ENCODE measurements at regions of chr1 and their contacts with region 1.

Region 1: GRCh38 chr1:205172729-205173366 is 38.7 kb downstream of the DSTYK start:
- DNase-seq: peak; percentile 91
- H3K4me3 ChIP-seq: no peak overlapping the region
- H3K27ac ChIP-seq: peak overlapping the region; percentile 53
- H3K4me1 ChIP-seq: peaks cover 27% of the 10 kb centered on the region
- H3K27me3 ChIP-seq: no peaks in the 10 kb centered on the region
- CTCF ChIP-seq: no peak

Region 2: GRCh38 chr1:203326830-203327683 is 1845.8 kb before region 1 on chr1:
- CTCF ChIA-PET with region 1: interaction called, 10 read pairs
- dilution Hi-C with region 1: no loop called
- in situ Hi-C with region 1: no loop called
- intact Hi-C with region 1: no loop called
- DNase-seq: peak; percentile 89
- H3K4me3 ChIP-seq: peak overlapping the region; percentile 47 to 59 (median 51)
- H3K27ac ChIP-seq: peak overlapping the region; percentile 37
- H3K4me1 ChIP-seq: peaks cover 14% of the 10 kb centered on the region
- H3K27me3 ChIP-seq: no peaks in the 10 kb centered on the region
- CTCF ChIP-seq: no peak

Region 3: DNA sequence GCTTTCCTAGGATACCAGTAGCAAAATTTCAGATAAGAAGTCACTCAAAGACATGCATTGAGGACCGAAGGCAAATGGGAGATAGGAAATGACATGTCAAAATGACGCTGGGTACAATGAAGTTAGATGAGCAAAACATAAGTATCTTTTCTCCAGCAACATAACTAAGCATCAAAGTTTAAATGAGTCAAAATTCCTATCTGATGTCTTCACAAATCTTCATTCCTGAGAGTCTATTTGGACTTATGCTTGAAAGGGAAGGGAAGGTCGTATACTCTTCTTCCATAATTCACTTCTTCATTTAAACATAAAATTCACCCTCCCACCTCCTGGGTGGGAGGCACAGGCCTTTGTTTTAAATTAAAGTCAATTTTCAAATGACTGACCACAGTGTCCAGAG is 84.5 kb before region 1 on chr1:
- CTCF ChIA-PET with region 1: no interaction called
- dilution Hi-C with region 1: no loop called
- in situ Hi-C with region 1: no loop called
- intact Hi-C with region 1: no loop called
- DNase-seq: no peak
- H3K4me3 ChIP-seq: no peak overlapping the region
- H3K27ac ChIP-seq: no peak overlapping the region
- H3K4me1 ChIP-seq: no peaks in the 10 kb centered on the region
- H3K27me3 ChIP-seq: no peaks in the 10 kb centered on the region
- CTCF ChIP-seq: no peak

Region 4: GRCh38 chr1:205121660-205122488 is 51.0 kb before region 1 on chr1 and contains the start of gene RBBP5:
- CTCF ChIA-PET with region 1: interaction called, 3 read pairs
- dilution Hi-C with region 1: no loop called
- in situ Hi-C with region 1: no loop called
- intact Hi-C with region 1: loop called (anchors 2 kb)
- DNase-seq: peak; percentile 93
- H3K4me3 ChIP-seq: peak within 1 kb of the TSS; percentile 68 to 96 (median 85)
- H3K27ac ChIP-seq: peak within 1 kb of the TSS; percentile 99
- H3K4me1 ChIP-seq: peaks cover 12% of the 10 kb centered on the region
- H3K27me3 ChIP-seq: no peaks in the 10 kb centered on the region
- CTCF ChIP-seq: peak; percentile 67 to 85
- total RNA-seq, gene RBBP5: 15.2 to 17.5 TPM

Region 5: GRCh38 chr1:205141236-205142101 is 31.4 kb before region 1 on chr1:
- CTCF ChIA-PET with region 1: interaction called, 12 read pairs
- dilution Hi-C with region 1: no loop called
- in situ Hi-C with region 1: no loop called
- intact Hi-C with region 1: loop called (anchors 1 kb)
- DNase-seq: peak; percentile 66
- H3K4me3 ChIP-seq: no peak overlapping the region
- H3K27ac ChIP-seq: no peak overlapping the region
- H3K4me1 ChIP-seq: peaks cover 8% of the 10 kb centered on the region
- H3K27me3 ChIP-seq: no peaks in the 10 kb centered on the region
- CTCF ChIP-seq: peak; percentile 69 to 74

Region 6: GRCh38 chr1:205199090-205199930 is 26.5 kb after region 1 on chr1:
- CTCF ChIA-PET with region 1: no interaction called
- dilution Hi-C with region 1: no loop called
- in situ Hi-C with region 1: no loop called
- intact Hi-C with region 1: loop called (anchors 2 kb)
- DNase-seq: peak; percentile 73
- H3K4me3 ChIP-seq: no peak overlapping the region
- H3K27ac ChIP-seq: no peak overlapping the region
- H3K4me1 ChIP-seq: peaks cover 11% of the 10 kb centered on the region
- H3K27me3 ChIP-seq: no peaks in the 10 kb centered on the region
- CTCF ChIP-seq: no peak

Region 7: GRCh38 chr1:205211169-205211838 is 38.5 kb after region 1 on chr1 and contains the start of gene DSTYK:
- CTCF ChIA-PET with region 1: no interaction called
- dilution Hi-C with region 1: no loop called
- in situ Hi-C with region 1: loop called in 1 of 2 experiments (anchors 5 kb)
- intact Hi-C with region 1: loop called (anchors 1 kb)
- DNase-seq: peak; percentile 93
- H3K4me3 ChIP-seq: peak within 1 kb of the TSS; percentile 71 to 97 (median 81)
- H3K27ac ChIP-seq: peak within 1 kb of the TSS; percentile 80
- H3K4me1 ChIP-seq: peaks cover 4% of the 10 kb centered on the region
- H3K27me3 ChIP-seq: no peaks in the 10 kb centered on the region
- CTCF ChIP-seq: no peak
- total RNA-seq, gene DSTYK: 11.0 to 19.2 TPM

Region 8: DNA sequence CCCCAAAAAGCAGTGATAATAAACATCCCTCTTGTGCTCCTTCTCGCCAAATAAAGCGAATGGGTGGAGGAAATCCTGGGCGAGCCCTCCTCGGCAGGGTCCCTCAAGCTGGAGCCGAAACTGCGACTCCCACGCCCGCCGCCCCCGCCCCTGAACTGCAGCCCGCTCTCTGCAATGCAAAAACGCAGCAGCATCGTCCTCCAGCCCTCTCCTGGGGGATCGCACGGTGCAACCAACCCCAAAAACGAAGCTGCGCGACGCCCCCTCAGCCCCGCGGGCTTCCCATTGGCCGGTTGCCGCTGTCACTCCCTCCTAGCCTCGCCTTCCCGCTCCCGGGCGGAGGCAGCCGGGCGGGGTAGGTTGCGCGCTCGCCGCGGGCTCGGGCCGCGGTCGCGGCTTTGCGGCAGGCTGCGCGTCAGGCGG is 54.7 kb after region 1 on chr1 and contains the start of gene TMCC2:
- CTCF ChIA-PET with region 1: interaction called, 11 read pairs
- dilution Hi-C with region 1: no loop called
- in situ Hi-C with region 1: no loop called
- intact Hi-C with region 1: loop called (anchors 5 kb)
- DNase-seq: peak; percentile 81
- H3K4me3 ChIP-seq: peak within 1 kb of the TSS; percentile 58 to 73 (median 71)
- H3K27ac ChIP-seq: peak within 1 kb of the TSS; percentile 78
- H3K4me1 ChIP-seq: peaks cover 39% of the 10 kb centered on the region
- H3K27me3 ChIP-seq: no peaks in the 10 kb centered on the region
- CTCF ChIP-seq: no peak
- total RNA-seq, gene TMCC2: 1.5 to 11.5 TPM

Measured in mammary epithelial cell (primary cell).